ENCODE measurements at regions of chr12 and their contacts with region 1.

Region 1: GRCh38 chr12:102484428-102484958 is 4.1 kb upstream of the IGF1 start:
- DNase-seq: peak; percentile 73
- H3K4me3 ChIP-seq: no peak overlapping the region
- H3K27ac ChIP-seq: no peak overlapping the region
- H3K4me1 ChIP-seq: peaks cover 22% of the 10 kb centered on the region
- H3K27me3 ChIP-seq: no peaks in the 10 kb centered on the region
- CTCF ChIP-seq: peak; percentile 91

Region 2: GRCh38 chr12:101939856-101940265 is 544.6 kb before region 1 on chr12:
- CTCF ChIA-PET with region 1: no interaction called
- POLR2A ChIA-PET with region 1: no interaction called
- intact Hi-C with region 1: loop called (anchors 5 kb)
- DNase-seq: peak; percentile 87
- H3K4me3 ChIP-seq: no peak overlapping the region
- H3K27ac ChIP-seq: no peak overlapping the region
- H3K4me1 ChIP-seq: peaks cover 29% of the 10 kb centered on the region
- H3K27me3 ChIP-seq: no peaks in the 10 kb centered on the region
- CTCF ChIP-seq: peak; percentile 90

Region 3: GRCh38 chr12:102169922-102170621 is 314.4 kb before region 1 on chr12:
- CTCF ChIA-PET with region 1: interaction called, 3 read pairs
- POLR2A ChIA-PET with region 1: no interaction called
- intact Hi-C with region 1: loop called (anchors 5 kb)
- DNase-seq: peak; percentile 34
- H3K4me3 ChIP-seq: no peak overlapping the region
- H3K27ac ChIP-seq: no peak overlapping the region
- H3K4me1 ChIP-seq: no peaks in the 10 kb centered on the region
- H3K27me3 ChIP-seq: peaks cover 30% of the 10 kb centered on the region
- CTCF ChIP-seq: peak; percentile 79

Region 4: GRCh38 chr12:102421801-102422583 is 62.5 kb before region 1 on chr12:
- CTCF ChIA-PET with region 1: no interaction called
- POLR2A ChIA-PET with region 1: no interaction called
- intact Hi-C with region 1: loop called (anchors 5 kb)
- DNase-seq: peak; percentile 52
- H3K4me3 ChIP-seq: no peak overlapping the region
- H3K27ac ChIP-seq: no peak overlapping the region
- H3K4me1 ChIP-seq: peaks cover 20% of the 10 kb centered on the region
- H3K27me3 ChIP-seq: no peaks in the 10 kb centered on the region
- CTCF ChIP-seq: no peak

Region 5: GRCh38 chr12:102702447-102703114 is 218.1 kb after region 1 on chr12:
- CTCF ChIA-PET with region 1: no interaction called
- POLR2A ChIA-PET with region 1: no interaction called
- intact Hi-C with region 1: no loop called
- DNase-seq: peak; percentile 69
- H3K4me3 ChIP-seq: no peak overlapping the region
- H3K27ac ChIP-seq: no peak overlapping the region
- H3K4me1 ChIP-seq: no peaks in the 10 kb centered on the region
- H3K27me3 ChIP-seq: peaks cover 5% of the 10 kb centered on the region
- CTCF ChIP-seq: peak; percentile 78

Measured in A673 (cell line).